H1 (cell line): ENCODE measurements at regions of chr1 and their contacts with region 1.

Region 1: DNA sequence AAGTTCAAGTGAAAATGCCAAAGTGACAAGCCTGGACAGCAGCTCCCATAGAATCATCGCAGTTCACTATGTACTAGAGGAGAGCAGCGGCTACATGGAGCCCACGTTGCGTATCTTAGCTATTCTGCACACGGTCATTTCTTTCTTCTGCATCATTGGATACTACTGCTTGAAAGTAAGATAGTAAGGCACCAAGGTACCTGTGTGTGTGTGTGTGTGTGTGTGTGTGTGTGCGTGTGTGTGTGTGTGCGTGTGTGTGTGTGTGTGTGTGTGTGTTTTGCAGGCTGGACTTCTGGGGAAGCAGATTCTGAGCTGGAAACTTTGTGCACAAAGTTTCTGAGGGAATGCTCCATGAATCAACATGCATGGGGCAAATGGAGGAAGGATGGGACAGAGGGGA is 98.6 kb downstream of the ZP4 start:
- DNase-seq: no peak
- H3K4me3 ChIP-seq: no peak overlapping the region
- H3K27ac ChIP-seq: no peak overlapping the region
- H3K4me1 ChIP-seq: no peaks in the 10 kb centered on the region
- H3K27me3 ChIP-seq: no peaks in the 10 kb centered on the region
- CTCF ChIP-seq: no peak
- EP300 ChIP-seq: no peak
- POLR2A ChIP-seq: no peak
- RAD21 ChIP-seq: no peak

Region 2: DNA sequence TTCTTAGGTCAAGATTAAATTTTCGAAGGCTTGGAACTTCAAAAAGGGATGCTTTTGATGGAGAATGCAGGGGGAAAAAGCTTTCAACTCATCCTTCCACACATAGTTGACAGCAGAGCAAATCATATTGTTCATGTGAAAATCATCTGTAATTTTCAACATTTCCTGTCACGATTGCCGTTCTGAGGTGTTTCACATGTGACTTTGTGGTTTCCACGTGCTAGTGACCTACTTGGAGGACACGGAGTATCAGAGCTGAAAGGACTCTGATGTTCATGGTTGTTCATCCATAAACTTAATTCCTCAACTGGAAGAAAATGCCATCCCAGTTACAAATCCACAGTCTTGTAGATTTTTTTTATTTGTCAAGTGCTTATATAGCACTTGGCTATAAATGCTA is 19.5 kb after region 1 on chr1:
- CTCF ChIA-PET with region 1: interaction called, 10 read pairs
- POLR2A ChIA-PET with region 1: no interaction called
- DNase-seq: no peak
- H3K4me3 ChIP-seq: no peak overlapping the region
- H3K27ac ChIP-seq: no peak overlapping the region
- H3K4me1 ChIP-seq: no peaks in the 10 kb centered on the region; a peak in 1 of 7 replicates
- H3K27me3 ChIP-seq: no peaks in the 10 kb centered on the region
- CTCF ChIP-seq: no peak
- EP300 ChIP-seq: no peak
- POLR2A ChIP-seq: no peak
- RAD21 ChIP-seq: no peak